Dendritic cell treated with granulocyte-macrophage colony-stimulating factor and Interleukin-4, amounts not matched to agents 40 ng/mL and 50 ng/mL, for 4 days (primary cell): ENCODE measurements at regions of chrX and their contacts with region 1.

Region 1: DNA sequence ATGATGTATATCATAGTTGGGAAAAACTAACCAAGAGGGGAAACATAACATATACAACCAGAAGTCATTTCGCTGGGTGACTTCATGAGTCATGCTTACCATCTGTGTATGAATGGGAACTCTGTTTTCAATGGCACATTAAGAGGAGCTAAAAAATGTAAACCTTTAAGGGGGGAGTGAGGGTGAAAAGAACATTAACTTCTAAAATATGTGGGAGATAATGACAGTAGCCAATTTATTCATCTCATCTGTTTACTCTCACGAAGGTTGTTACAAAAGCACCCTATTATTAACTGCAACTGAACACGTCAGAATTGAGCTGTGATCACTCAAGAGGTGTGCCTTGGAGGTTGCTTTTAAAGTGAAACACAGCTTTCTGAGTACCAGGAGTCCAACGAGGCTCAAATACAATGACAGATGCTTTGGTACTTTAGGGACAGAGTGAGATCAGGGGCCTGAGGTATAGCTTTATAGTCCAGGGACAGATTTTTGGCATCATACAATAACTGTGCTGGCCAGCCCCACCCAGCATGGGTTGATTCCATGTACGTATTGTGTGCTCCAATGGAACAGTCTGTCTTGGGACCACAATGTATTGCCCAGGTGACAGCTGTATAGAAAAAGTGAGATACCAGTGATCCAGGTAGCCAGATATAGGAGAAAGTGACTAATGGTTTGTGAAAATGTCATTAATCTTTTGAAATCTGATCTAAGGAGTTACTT is 107.3 kb downstream of the AMMECR1 start:
- H3K4me3 Mint-ChIP-seq: no peak overlapping the region
- H3K27ac Mint-ChIP-seq: no peak overlapping the region
- H3K4me1 Mint-ChIP-seq: no peaks in the 10 kb centered on the region
- H3K27me3 Mint-ChIP-seq: no peaks in the 10 kb centered on the region

Region 2: GRCh38 chrX:109966246-109966645 is 244.3 kb before region 1 on chrX:
- intact Hi-C with region 1: no loop called
- H3K4me3 Mint-ChIP-seq: no peak overlapping the region
- H3K27ac Mint-ChIP-seq: no peak overlapping the region
- H3K4me1 Mint-ChIP-seq: no peaks in the 10 kb centered on the region
- H3K27me3 Mint-ChIP-seq: no peaks in the 10 kb centered on the region

Region 3: DNA sequence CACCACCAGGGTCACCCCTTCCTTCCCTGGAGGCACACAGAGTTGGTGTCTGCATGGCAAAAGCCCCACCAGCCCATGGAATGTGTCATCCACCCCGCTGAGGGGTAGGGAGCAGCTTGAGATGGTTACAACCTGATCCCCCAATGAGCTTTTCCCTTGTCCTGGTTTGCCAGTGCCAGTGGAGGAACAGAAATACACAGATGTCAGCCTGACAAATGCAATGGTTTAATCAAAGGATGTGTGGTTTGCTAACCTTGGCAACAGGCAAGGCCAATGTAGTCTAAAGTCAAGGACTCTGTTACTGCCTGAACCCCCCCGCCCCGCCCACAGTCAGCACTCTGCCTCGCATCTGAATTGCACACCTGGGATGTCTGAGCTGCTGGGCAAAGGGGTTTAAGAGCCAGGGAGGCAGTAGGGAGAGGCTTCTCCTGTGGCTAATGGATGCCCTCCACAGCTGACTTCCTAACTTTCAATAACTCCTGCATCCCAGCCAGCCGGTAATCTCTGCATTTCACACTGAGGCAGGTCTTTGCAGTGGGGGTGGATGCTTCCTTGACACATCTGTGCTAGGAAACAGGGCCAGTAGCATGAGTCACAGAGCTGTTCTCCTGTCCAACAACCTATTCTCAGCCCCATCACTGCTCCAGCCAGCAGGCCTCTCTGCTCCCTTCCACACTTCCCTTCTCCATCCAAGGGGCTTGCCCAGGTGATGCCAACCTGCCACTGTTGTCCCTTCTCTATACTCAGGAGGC is 30.2 kb before region 1 on chrX:
- intact Hi-C with region 1: no loop called
- H3K4me3 Mint-ChIP-seq: no peak overlapping the region
- H3K27ac Mint-ChIP-seq: no peak overlapping the region
- H3K4me1 Mint-ChIP-seq: peaks cover 4% of the 10 kb centered on the region
- H3K27me3 Mint-ChIP-seq: no peaks in the 10 kb centered on the region

Region 4: GRCh38 chrX:110268886-110269285 is 58.3 kb after region 1 on chrX:
- intact Hi-C with region 1: loop called (anchors 10 kb)
- H3K4me3 Mint-ChIP-seq: no peak overlapping the region
- H3K27ac Mint-ChIP-seq: no peak overlapping the region
- H3K4me1 Mint-ChIP-seq: no peaks in the 10 kb centered on the region
- H3K27me3 Mint-ChIP-seq: no peaks in the 10 kb centered on the region